Cardiac septum (tissue), 1 donor: ENCODE measurements at regions of chr1 and their contacts with region 1.

Region 1: GRCh38 chr1:101238681-101239094 is 1.9 kb downstream of the S1PR1 start:
- DNase-seq: peak; percentile 95

Region 2: GRCh38 chr1:100921109-100921706 is 317.5 kb before region 1 on chr1:
- intact Hi-C with region 1: loop called (anchors 2 kb)
- DNase-seq: no peak

Region 3: GRCh38 chr1:101043776-101044175 is 194.9 kb before region 1 on chr1:
- intact Hi-C with region 1: loop called (anchors 5 kb)
- DNase-seq: no peak

Region 4: DNA sequence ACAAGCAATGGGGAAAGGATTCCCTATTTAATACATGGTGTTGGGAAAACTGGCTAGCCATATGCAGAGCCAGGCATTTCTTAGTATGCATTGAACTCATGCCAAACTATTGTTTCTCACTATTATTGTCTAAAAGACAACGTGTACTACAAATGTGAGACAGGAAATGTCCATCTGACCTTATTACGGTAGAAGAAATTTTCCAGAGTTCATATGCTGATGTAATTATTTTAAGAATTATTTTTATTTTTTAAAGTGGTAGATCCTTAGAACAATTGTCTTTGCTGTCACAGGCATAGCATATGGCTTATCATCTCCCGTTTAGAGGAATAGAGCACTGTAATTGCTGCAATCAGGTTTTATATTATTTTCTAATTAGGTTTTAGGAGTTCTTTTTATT is 77.1 kb before region 1 on chr1:
- intact Hi-C with region 1: loop called (anchors 5 kb)
- DNase-seq: no peak

Region 5: GRCh38 chr1:101203820-101204540 is 34.7 kb before region 1 on chr1:
- intact Hi-C with region 1: loop called (anchors 2 kb)
- DNase-seq: no peak

Region 6: DNA sequence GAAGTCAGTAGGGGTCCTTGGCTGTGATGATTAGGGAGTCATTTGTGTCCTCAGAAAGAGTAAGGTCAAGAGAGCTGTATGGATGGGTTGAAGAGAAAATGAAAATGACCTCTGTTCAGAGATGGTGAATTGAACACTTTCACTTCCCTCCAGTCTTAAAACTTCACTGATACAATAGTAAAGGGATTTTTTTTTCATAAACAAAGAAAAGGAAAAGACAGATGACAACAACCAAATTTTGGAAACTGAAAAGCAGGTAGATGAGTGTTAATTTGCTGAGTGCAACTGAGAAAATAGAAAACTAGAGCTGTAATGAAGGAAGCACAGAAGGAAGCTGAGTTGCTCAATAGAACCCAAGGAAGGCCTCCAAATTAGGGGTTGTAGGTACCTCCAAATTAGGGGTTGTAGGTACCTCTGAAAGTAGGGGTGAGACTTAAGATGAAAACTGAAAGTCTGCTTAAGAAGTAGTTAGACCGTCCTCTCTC is 16.7 kb before region 1 on chr1:
- intact Hi-C with region 1: no loop called
- DNase-seq: no peak

Region 7: GRCh38 chr1:101288491-101288944 is 49.8 kb after region 1 on chr1:
- intact Hi-C with region 1: loop called (anchors 2 kb)
- DNase-seq: no peak